ENCODE measurements at regions of chr5 and their contacts with region 1.

Region 1: DNA sequence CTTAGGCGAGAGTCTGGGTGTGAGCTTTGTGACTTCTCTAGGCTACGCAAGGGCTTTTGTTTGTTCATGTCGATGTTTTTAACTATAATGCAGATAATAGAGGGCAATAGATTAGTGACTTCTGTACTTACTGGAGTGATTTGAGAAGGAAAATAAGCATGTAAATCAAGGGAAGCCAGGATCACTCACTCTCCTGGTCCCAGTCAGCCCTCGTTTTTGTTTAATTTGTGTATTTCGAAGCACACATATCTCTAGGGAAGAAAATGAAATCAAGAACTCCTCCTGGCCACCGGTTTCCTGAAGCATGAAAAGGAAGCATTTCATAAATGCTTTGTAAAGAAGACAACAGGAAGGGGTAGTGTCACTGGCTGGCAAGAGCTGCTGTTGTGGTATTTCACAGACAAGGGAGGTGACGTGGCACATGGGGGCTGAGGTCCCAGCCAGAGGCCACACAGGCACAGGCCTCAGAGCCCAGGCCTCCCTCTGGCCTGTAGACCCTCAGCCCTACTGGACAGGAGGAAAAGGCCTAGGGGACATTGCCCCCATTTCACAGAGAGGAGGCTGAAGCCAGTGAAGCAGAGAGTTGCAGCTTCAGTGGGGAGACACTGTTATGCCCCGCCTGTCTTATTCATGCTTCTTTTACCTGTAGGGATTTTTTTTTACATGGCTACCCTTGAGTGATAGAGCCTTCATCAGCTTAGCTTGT is 34.1 kb downstream of the IRF1 start:
- DNase-seq: peak; percentile 73
- ATAC-seq: peak; percentile 78
- H3K4me3 ChIP-seq: peak overlapping the region; percentile 2; the same call in 1 of the 2 replicates
- H3K27ac ChIP-seq: peak overlapping the region; percentile 89
- H3K4me1 ChIP-seq: peaks cover 63% of the 10 kb centered on the region
- H3K27me3 ChIP-seq: no peaks in the 10 kb centered on the region
- CTCF ChIP-seq: no peak
- EP300 ChIP-seq: peak in 1 of 2 experiments; percentile 23; a peak in 1 of 4 replicates
- POLR2A ChIP-seq: no peak
- RAD21 ChIP-seq: no peak

Region 2: GRCh38 chr5:132410451-132411381 is 45.7 kb before region 1 on chr5:
- CTCF ChIA-PET with region 1: interaction called, 3 read pairs
- POLR2A ChIA-PET with region 1: interaction called, 11 read pairs
- RAD21 ChIA-PET with region 1: interaction called, 12 read pairs
- SMC1A ChIA-PET with region 1: interaction called, 29 read pairs
- in situ Hi-C with region 1: no loop called
- intact Hi-C with region 1: no loop called
- DNase-seq: no peak
- ATAC-seq: peak; percentile 68
- H3K4me3 ChIP-seq: peak overlapping the region; percentile 89
- H3K27ac ChIP-seq: peak overlapping the region; percentile 95
- H3K4me1 ChIP-seq: peaks cover 11% of the 10 kb centered on the region
- H3K27me3 ChIP-seq: no peaks in the 10 kb centered on the region
- CTCF ChIP-seq: peak; percentile 54 to 67 (median 61)
- EP300 ChIP-seq: peak in 1 of 2 experiments; percentile 39; a peak in 1 of 4 replicates
- POLR2A ChIP-seq: peak; percentile 90
- RAD21 ChIP-seq: peak; percentile 51; the same call in 1 of the 2 replicates

Region 3: DNA sequence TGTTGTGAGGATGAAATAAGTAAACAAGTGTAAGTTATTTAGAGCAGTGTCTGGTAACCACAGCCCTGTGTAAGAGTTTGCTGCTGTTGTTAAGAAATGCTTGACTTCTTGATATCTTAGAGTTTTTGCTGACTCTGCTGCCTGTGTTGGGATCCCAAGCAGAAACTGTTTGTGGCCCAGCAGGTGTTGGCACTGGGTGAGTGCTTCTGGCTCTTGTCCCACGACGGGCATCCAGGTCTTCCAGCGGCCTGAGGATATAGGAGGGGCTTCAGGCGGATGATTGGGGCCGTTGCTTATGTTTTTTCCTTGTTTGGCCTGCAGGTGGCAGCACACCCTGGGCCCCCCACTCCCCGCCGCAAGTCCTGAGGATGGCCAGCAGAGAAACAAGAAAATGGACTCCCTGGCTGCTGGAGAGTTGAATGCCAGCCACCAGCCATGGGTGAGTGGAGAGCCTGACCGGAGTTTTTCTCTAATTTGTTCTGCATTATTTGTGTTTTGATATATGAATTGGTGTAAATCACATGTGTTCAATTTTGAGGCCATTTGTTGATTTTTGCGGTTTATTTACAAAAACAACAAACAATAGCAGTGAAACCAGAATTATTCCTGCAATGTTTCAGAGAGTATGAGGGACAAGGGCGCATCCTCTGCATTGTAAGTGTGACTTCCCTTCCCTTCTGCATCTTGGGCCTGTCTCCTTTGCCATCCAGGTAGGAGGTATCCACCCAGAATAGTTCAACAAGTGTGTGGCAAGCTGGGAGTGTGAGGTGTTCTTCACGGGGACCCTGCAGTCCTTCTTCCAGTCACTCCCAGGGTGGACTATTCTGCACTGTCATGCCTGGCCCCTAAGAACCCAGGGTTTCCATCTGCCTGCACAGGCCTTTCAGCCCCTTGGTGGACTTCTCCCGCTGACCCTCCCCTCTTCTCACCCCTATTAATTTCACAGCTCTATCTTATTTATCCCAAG is 36.7 kb before region 1 on chr5:
- CTCF ChIA-PET with region 1: interaction called, 139 read pairs
- POLR2A ChIA-PET with region 1: interaction called, 23 read pairs
- RAD21 ChIA-PET with region 1: interaction called, 192 read pairs
- SMC1A ChIA-PET with region 1: interaction called, 300 read pairs
- in situ Hi-C with region 1: no loop called
- intact Hi-C with region 1: no loop called
- DNase-seq: no peak
- ATAC-seq: peak; percentile 50
- H3K4me3 ChIP-seq: peak overlapping the region; percentile 31; the same call in 1 of the 2 replicates
- H3K27ac ChIP-seq: peak overlapping the region; percentile 94
- H3K4me1 ChIP-seq: peaks cover 79% of the 10 kb centered on the region
- H3K27me3 ChIP-seq: no peaks in the 10 kb centered on the region
- CTCF ChIP-seq: peak; percentile 74 to 81 (median 80)
- EP300 ChIP-seq: no peak
- POLR2A ChIP-seq: no peak
- RAD21 ChIP-seq: peak; percentile 78

Region 4: GRCh38 chr5:132426525-132427138 is 29.8 kb before region 1 on chr5:
- CTCF ChIA-PET with region 1: interaction called, 139 read pairs
- POLR2A ChIA-PET with region 1: interaction called, 128 read pairs
- RAD21 ChIA-PET with region 1: interaction called, 192 read pairs
- SMC1A ChIA-PET with region 1: interaction called, 300 read pairs
- in situ Hi-C with region 1: no loop called
- intact Hi-C with region 1: loop called (anchors 1 kb)
- DNase-seq: no peak
- ATAC-seq: peak; percentile 62
- H3K4me3 ChIP-seq: peak overlapping the region; percentile 49
- H3K27ac ChIP-seq: peak overlapping the region; percentile 94
- H3K4me1 ChIP-seq: peaks cover 90% of the 10 kb centered on the region
- H3K27me3 ChIP-seq: no peaks in the 10 kb centered on the region
- CTCF ChIP-seq: peak; percentile 47 to 56 (median 52)
- EP300 ChIP-seq: peak; percentile 17 to 67; a peak in 3 of 4 replicates
- POLR2A ChIP-seq: peak; percentile 88
- RAD21 ChIP-seq: peak; percentile 42; the same call in 1 of the 2 replicates

Region 5: GRCh38 chr5:132437604-132438266 is 18.7 kb before region 1 on chr5:
- CTCF ChIA-PET with region 1: interaction called, 5 read pairs
- POLR2A ChIA-PET with region 1: interaction called, 128 read pairs
- RAD21 ChIA-PET with region 1: interaction called, 192 read pairs
- SMC1A ChIA-PET with region 1: interaction called, 300 read pairs
- in situ Hi-C with region 1: no loop called
- intact Hi-C with region 1: no loop called
- DNase-seq: no peak
- ATAC-seq: peak; percentile 91
- H3K4me3 ChIP-seq: peak overlapping the region; percentile 18; the same call in 1 of the 2 replicates
- H3K27ac ChIP-seq: peak overlapping the region; percentile 62
- H3K4me1 ChIP-seq: peaks cover 28% of the 10 kb centered on the region
- H3K27me3 ChIP-seq: no peaks in the 10 kb centered on the region
- CTCF ChIP-seq: no peak
- EP300 ChIP-seq: no peak
- POLR2A ChIP-seq: peak; percentile 36; the same call in 1 of the 2 replicates
- RAD21 ChIP-seq: peak; percentile 19; the same call in 1 of the 2 replicates

Region 6: DNA sequence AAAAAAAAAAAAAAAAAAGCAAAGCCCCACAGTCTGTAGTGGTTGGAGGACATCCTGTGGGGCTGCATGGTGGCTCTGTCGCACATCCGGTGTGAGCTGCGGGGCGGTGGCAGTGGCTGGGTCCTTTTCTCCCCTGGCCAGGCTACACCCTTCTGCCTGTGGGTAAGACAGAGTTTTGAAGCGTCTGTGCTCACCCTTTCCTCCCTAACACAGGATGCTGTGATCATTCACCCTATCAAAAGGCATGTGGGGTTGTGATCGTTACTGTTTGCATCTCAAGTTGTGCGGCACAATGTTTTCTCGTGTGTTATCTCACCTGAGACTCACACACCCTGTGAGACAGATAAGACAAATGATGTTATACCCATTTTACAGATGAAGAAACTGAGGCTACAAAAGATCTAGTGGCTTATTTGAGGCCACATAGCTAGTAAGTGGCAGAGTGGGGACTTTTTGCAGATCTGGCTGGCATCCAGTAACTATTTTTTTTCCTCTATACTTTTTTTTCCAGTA is 16.6 kb after region 1 on chr5:
- CTCF ChIA-PET with region 1: interaction called, 8 read pairs
- POLR2A ChIA-PET with region 1: interaction called, 79 read pairs
- RAD21 ChIA-PET with region 1: interaction called, 69 read pairs
- SMC1A ChIA-PET with region 1: interaction called, 131 read pairs
- in situ Hi-C with region 1: no loop called
- intact Hi-C with region 1: no loop called
- DNase-seq: no peak
- ATAC-seq: peak; percentile 84
- H3K4me3 ChIP-seq: no peak overlapping the region
- H3K27ac ChIP-seq: peak overlapping the region; percentile 68
- H3K4me1 ChIP-seq: peaks cover 38% of the 10 kb centered on the region
- H3K27me3 ChIP-seq: no peaks in the 10 kb centered on the region
- CTCF ChIP-seq: no peak
- EP300 ChIP-seq: no peak
- POLR2A ChIP-seq: peak; percentile 38; the same call in 1 of the 2 replicates
- RAD21 ChIP-seq: no peak

Measured in GM12878 (cell line).